HCT116 (cell line): ENCODE measurements at regions of chr2 and their contacts with region 1.

Region 1: DNA sequence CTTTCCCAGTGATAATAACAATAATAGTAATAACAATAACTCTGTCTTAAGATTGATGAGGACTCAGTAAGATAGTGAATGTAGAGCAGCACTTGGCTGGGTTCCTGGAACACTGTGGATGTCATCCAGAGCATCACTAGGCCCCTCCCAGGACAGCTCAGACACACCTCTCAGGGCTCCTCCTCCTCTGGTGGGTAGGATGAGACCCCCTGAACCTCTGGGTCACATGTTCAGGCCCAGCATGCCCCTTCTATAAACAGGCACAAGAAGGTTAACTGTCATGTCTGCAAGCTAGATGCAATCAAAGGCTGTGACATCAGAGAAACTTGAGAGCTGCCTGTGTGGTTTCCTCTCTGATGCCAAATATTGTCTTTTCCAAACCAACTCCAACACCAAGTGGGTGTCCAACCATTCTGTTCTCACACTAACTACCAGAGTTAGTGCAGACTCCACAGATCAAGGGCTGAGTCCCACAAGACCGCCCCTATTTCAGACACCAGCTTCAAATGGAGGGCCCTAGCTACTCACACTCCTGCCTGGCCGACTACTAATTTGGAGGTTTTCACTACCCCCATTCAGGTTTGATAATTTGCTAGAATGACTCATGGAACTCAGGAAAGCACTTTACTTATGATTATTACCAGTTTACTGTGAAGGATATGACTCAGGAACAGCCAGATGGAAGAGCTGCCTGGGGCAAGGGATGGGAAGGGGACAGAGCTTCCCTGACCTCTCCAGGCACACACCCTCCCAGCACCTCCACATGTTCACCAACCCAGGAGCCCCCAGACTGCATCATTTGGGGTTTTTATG is 46.4 kb upstream of the BZW1 start:
- DNase-seq: peak; percentile 88
- ATAC-seq: peak; percentile 71
- H3K4me3 ChIP-seq: peak overlapping the region; percentile 27 to 54
- H3K27ac ChIP-seq: peak overlapping the region; percentile 75
- H3K4me1 ChIP-seq: peaks cover 42 to 76% of the 10 kb centered on the region in 2 experiments
- H3K27me3 ChIP-seq: no peaks in the 10 kb centered on the region
- CTCF ChIP-seq: no peak
- POLR2A ChIP-seq: no peak
- RAD21 ChIP-seq: peak; percentile 51

Region 2: GRCh38 chr2:200609027-200609614 is 156.2 kb before region 1 on chr2:
- CTCF ChIA-PET with region 1: no interaction called
- POLR2A ChIA-PET with region 1: no interaction called
- RAD21 ChIA-PET with region 1: no interaction called
- intact Hi-C with region 1: no loop called
- DNase-seq: peak; percentile 24
- ATAC-seq: peak; percentile 91
- H3K4me3 ChIP-seq: no peak overlapping the region; a peak in 1 of 4 replicates
- H3K27ac ChIP-seq: no peak overlapping the region
- H3K4me1 ChIP-seq: peaks cover 2 to 20% of the 10 kb centered on the region in 2 experiments; a peak in 3 of 4 replicates
- H3K27me3 ChIP-seq: no peaks in the 10 kb centered on the region
- CTCF ChIP-seq: no peak
- POLR2A ChIP-seq: no peak
- RAD21 ChIP-seq: no peak

Region 3: GRCh38 chr2:200787348-200788120 is 22.2 kb after region 1 on chr2:
- CTCF ChIA-PET with region 1: no interaction called
- POLR2A ChIA-PET with region 1: interaction called, 10 read pairs
- RAD21 ChIA-PET with region 1: no interaction called
- intact Hi-C with region 1: no loop called
- DNase-seq: no peak
- ATAC-seq: peak; percentile 46
- H3K4me3 ChIP-seq: no peak overlapping the region
- H3K27ac ChIP-seq: peak overlapping the region; percentile 21; the same call in 1 of the 2 replicates
- H3K4me1 ChIP-seq: peaks cover 17 to 31% of the 10 kb centered on the region in 2 experiments
- H3K27me3 ChIP-seq: no peaks in the 10 kb centered on the region
- CTCF ChIP-seq: no peak
- POLR2A ChIP-seq: no peak
- RAD21 ChIP-seq: 0 out of 2 replicates have a peak, but pooled peaks have one; percentile 7

Region 4: GRCh38 chr2:200811336-200812121 is 46.2 kb after region 1 on chr2 and contains the start of gene BZW1:
- CTCF ChIA-PET with region 1: no interaction called
- POLR2A ChIA-PET with region 1: interaction called, 7 read pairs
- RAD21 ChIA-PET with region 1: no interaction called
- intact Hi-C with region 1: loop called (anchors 2 kb)
- DNase-seq: peak; percentile 92
- ATAC-seq: peak; percentile 90
- H3K4me3 ChIP-seq: peak within 1 kb of the TSS; percentile 66 to 85
- H3K27ac ChIP-seq: peak within 1 kb of the TSS; percentile 96
- H3K4me1 ChIP-seq: peaks cover 12 to 26% of the 10 kb centered on the region in 2 experiments
- H3K27me3 ChIP-seq: no peaks in the 10 kb centered on the region
- CTCF ChIP-seq: no peak
- POLR2A ChIP-seq: peak; percentile 74
- RAD21 ChIP-seq: 0 out of 2 replicates have a peak, but pooled peaks have one; percentile 4
- total RNA-seq, gene BZW1: 454 TPM